AG04449 (cell line): ENCODE measurements at regions of chr20 and their contacts with region 1.

Region 1: GRCh38 chr20:31560094-31560899 is 44.8 kb upstream of the ID1 start:
- DNase-seq: no peak
- H3K4me3 ChIP-seq: no peak overlapping the region
- CTCF ChIP-seq: peak; percentile 89

Region 2: GRCh38 chr20:31547017-31547675 is 13.2 kb before region 1 on chr20:
- CTCF ChIA-PET with region 1: interaction called, 340 read pairs
- POLR2A ChIA-PET with region 1: interaction called, 3 read pairs
- DNase-seq: no peak
- H3K4me3 ChIP-seq: peak overlapping the region; percentile 59
- CTCF ChIP-seq: no peak

Region 3: GRCh38 chr20:31587545-31588389 is 27.5 kb after region 1 on chr20:
- CTCF ChIA-PET with region 1: interaction called, 47 read pairs
- POLR2A ChIA-PET with region 1: no interaction called
- DNase-seq: no peak
- H3K4me3 ChIP-seq: peak overlapping the region; percentile 55
- CTCF ChIP-seq: no peak